Activated CD4-positive, alpha-beta T cell treated with anti-CD3 and anti-CD28 coated beads for 36 hours (primary cell): ENCODE measurements at regions of chr7 and their contacts with region 1.

Region 1: GRCh38 chr7:108442039-108442568 is 14.1 kb downstream of the NRCAM start:
- DNase-seq: peak; percentile 76
- ATAC-seq: peak; percentile 99
- H3K4me3 Mint-ChIP-seq: no peak overlapping the region
- H3K27ac Mint-ChIP-seq: peak overlapping the region; percentile 60
- H3K4me1 Mint-ChIP-seq: peaks cover 11% of the 10 kb centered on the region
- H3K27me3 Mint-ChIP-seq: no peaks in the 10 kb centered on the region

Region 2: DNA sequence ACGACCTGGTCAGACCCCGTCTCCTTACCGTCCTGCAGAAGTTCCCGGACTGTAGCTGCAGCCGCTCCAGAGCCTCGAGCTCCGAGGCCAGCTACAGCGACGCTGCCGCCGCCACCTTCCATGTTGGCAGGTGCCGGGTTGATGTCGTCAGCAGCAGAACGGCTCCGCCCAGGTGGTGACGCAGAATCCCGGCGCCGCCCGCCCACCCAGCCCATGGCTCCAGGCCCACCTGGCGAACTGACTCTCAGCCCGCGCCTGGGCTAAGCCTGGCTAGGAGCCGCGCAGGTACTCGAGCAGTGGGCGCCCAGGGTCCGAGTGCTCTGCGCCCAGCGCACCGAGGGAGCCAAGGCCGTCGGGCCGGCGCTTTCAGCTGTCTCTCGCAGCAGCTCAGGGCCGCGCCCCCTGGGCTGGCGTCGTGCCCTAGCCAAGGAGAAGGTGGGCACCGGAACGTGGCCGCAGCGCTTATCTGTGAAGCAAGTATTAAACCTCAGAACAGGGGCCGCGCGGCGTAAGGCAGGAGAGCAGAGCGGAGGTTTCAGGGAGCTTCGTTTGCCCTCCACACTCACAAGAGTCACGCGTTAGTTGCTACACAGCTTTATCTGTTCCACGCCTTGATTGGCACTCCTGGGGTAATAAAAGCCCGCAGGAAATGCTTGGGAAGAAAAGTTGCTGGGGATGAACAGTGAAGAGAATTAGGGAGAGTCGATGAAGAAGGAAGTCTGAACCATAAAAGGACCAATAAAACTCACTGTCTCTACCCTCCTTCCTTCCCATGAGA is 878.1 kb before region 1 on chr7 and contains the starts of genes COG5 and DUS4L:
- CTCF ChIA-PET with region 1: no interaction called
- POLR2A ChIA-PET with region 1: no interaction called
- intact Hi-C with region 1: no loop called
- DNase-seq: peak; percentile 92
- ATAC-seq: peak; percentile 88
- H3K4me3 Mint-ChIP-seq: peak within 1 kb of the TSS; percentile 85
- H3K27ac Mint-ChIP-seq: peak within 1 kb of the TSS; percentile 94
- H3K4me1 Mint-ChIP-seq: peaks cover 62% of the 10 kb centered on the region
- H3K27me3 Mint-ChIP-seq: no peaks in the 10 kb centered on the region
- total RNA-seq, gene COG5: 34.1 to 35.5 TPM
- total RNA-seq, gene DUS4L: 12.8 to 13.3 TPM

Region 3: DNA sequence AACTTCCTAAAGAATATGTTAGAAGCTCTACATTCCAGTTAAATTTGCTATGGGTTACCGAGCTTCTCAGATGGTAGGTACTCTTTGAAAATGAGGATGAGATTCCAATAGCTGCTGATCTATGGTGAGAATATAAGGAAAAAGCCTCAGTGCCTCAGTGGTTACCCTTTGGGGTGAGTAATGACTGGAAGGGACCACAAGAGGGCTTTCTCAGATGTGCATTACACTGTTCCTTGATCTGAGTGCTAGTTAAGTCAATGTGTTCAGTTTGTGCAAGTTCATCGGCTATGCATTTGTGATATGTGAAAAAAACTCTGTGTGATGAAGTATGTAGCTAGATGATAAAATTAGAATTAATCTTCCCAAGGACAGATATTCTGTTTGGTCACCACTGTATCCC is 10.6 kb after region 1 on chr7:
- CTCF ChIA-PET with region 1: interaction called, 10 read pairs
- POLR2A ChIA-PET with region 1: no interaction called
- intact Hi-C with region 1: no loop called
- DNase-seq: no peak
- ATAC-seq: no peak
- H3K4me3 Mint-ChIP-seq: no peak overlapping the region
- H3K27ac Mint-ChIP-seq: no peak overlapping the region
- H3K4me1 Mint-ChIP-seq: peaks cover 18% of the 10 kb centered on the region
- H3K27me3 Mint-ChIP-seq: peaks cover 34% of the 10 kb centered on the region